ENCODE measurements at regions of chr10 and their contacts with region 1.

Region 1: GRCh38 chr10:11757821-11758463 is 15.8 kb downstream of the ECHDC3 start:
- DNase-seq: peak; percentile 92
- H3K4me3 Mint-ChIP-seq: no peak overlapping the region
- H3K27ac Mint-ChIP-seq: no peak overlapping the region
- H3K4me1 Mint-ChIP-seq: peaks cover 3% of the 10 kb centered on the region
- H3K27me3 Mint-ChIP-seq: peaks cover 20% of the 10 kb centered on the region

Region 2: DNA sequence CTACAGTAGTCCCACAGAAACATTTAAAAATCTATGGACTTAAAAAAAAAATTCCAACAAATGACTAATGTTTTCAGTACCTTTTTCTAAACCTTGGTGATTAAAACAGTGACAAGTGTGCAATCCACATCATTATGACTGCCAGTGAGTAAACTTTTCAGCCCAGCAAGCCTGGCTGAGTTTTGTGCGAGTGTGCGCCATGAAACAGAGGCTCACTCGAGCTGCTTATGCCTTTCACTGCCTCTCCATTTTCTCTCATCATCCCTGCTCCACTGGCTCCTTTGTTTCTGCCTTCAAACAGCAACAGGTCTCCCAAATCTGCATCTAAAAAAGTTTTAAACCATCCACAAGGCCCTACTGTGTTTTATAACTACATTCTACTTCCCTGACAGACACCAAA is 252.3 kb before region 1 on chr10:
- CTCF ChIA-PET with region 1: interaction called, 16 read pairs
- DNase-seq: no peak
- H3K4me3 Mint-ChIP-seq: no peak overlapping the region
- H3K27ac Mint-ChIP-seq: no peak overlapping the region
- H3K4me1 Mint-ChIP-seq: no peaks in the 10 kb centered on the region
- H3K27me3 Mint-ChIP-seq: peaks cover 3% of the 10 kb centered on the region

Region 3: DNA sequence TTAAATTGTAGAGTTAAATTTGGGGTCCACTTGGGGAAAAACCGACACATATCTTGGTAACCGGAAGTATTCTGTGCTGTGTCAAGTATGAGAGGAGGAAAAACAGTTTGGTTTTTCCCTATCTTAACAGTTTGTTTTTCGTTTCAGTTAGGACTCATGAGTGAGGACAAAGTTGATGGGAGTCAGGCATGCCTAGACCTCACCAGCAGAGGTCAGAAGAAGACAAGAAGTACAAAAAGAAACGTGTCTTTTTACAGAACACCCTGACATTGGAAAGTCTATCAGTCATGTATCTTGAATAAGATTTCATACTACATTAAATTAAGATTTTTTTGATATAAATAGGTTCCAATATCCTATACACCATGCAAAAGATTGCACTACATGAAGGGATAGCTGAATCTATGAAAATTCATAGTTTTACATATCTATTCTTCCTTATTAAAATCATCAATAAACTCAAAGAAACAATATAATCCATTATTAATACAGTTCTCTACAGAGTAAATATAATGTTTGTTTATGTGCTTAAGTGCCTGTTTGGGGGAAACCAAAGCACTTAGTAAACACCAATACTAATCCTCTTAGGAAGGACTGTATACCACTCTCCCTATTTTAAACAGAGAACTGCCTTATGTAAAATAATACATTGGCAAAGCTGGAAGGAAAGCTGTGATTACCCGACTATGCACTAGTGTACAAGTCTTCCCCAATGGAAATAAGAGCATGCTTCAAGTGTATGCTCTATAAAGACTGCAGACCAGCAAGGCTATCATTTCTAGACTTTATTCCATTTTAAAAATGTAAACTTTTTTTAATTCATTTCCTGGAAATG is 242.1 kb before region 1 on chr10:
- CTCF ChIA-PET with region 1: interaction called, 101 read pairs
- DNase-seq: peak; percentile 65
- H3K4me3 Mint-ChIP-seq: no peak overlapping the region
- H3K27ac Mint-ChIP-seq: no peak overlapping the region
- H3K4me1 Mint-ChIP-seq: peaks cover 17% of the 10 kb centered on the region
- H3K27me3 Mint-ChIP-seq: no peaks in the 10 kb centered on the region

Region 4: DNA sequence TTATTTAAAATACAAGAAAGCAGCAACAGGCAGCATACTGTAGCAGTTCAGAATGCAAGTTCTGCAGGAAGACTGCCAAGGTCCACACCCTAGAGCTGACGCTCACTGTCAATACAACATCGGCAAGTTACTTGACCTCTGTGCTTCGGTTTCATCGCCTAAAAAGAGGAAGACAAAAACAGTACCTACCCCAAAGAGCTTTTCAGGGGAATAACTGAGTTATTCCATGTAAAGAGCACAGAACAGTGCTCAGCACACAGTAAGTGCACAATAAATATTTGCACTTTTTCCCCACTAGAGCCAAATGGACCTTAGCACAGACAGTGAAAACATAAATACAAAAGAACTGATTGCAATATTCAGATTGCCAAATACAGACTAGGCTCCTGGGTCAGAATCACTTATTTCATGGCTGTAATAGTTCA is 235.1 kb before region 1 on chr10:
- CTCF ChIA-PET with region 1: interaction called, 19 read pairs
- DNase-seq: no peak
- H3K4me3 Mint-ChIP-seq: no peak overlapping the region
- H3K27ac Mint-ChIP-seq: no peak overlapping the region
- H3K4me1 Mint-ChIP-seq: peaks cover 11% of the 10 kb centered on the region
- H3K27me3 Mint-ChIP-seq: no peaks in the 10 kb centered on the region

Region 5: GRCh38 chr10:11772575-11773288 is 14.8 kb after region 1 on chr10:
- CTCF ChIA-PET with region 1: interaction called, 17 read pairs
- DNase-seq: no peak
- H3K4me3 Mint-ChIP-seq: no peak overlapping the region
- H3K27ac Mint-ChIP-seq: no peak overlapping the region
- H3K4me1 Mint-ChIP-seq: no peaks in the 10 kb centered on the region
- H3K27me3 Mint-ChIP-seq: peaks cover 44% of the 10 kb centered on the region

Measured in activated naive CD4-positive, alpha-beta T cell treated with anti-CD3 and anti-CD28 coated beads, Interleukin-2, amount 10 ng/mL, durations not matched to agents 7 days and 5 days (primary cell).